Right cardiac atrium (tissue), 5 donors: ENCODE measurements at regions of chr1 and their contacts with region 1.

Region 1: DNA sequence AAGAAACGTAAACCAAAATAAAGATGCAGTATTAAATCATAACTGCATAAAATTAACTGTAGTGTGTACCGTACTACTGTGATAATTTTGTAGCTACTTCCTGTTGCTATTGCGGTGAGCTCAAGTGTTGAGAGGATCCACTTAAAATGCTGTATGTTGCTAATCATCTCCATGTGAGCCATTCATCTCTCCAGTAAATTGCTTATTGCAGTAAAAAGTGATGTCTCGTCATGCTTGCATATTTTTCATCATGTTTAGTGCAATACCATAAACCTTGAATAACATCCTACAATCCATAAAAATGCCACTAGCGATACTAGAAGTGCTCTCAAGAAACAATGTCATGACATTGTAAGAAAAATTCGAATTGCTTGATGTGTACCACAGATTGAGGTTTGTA is 66.3 kb downstream of the RAVER2 start:
- DNase-seq: no peak
- ATAC-seq: no peak
- H3K4me3 ChIP-seq: no peak overlapping the region
- H3K27ac ChIP-seq: no peak overlapping the region
- H3K4me1 ChIP-seq: peaks cover 3% of the 10 kb centered on the region
- H3K27me3 ChIP-seq: no peaks in the 10 kb centered on the region

Region 2: GRCh38 chr1:64755361-64755760 is 55.8 kb before region 1 on chr1:
- intact Hi-C with region 1: loop called in 1 of 4 experiments (anchors 10 kb)
- DNase-seq: no peak
- ATAC-seq: peak; percentile 91 to 96
- H3K4me3 ChIP-seq: no peak overlapping the region
- H3K27ac ChIP-seq: no peak overlapping the region
- H3K4me1 ChIP-seq: peaks cover 6% of the 10 kb centered on the region
- H3K27me3 ChIP-seq: no peaks in the 10 kb centered on the region